Activated CD8-positive, alpha-beta T cell treated with anti-CD3 and anti-CD28 coated beads, Interleukin-2, amount 10 ng/mL, durations not matched to agents 7 days and 5 days (primary cell): ENCODE measurements at regions of chr5 and their contacts with region 1.

Region 1: GRCh38 chr5:96662725-96663513 is 743 bp downstream of the CAST start:
- DNase-seq: peak; percentile 89
- ATAC-seq: peak; percentile 85
- H3K4me3 Mint-ChIP-seq: peak overlapping the region; percentile 92
- H3K27ac Mint-ChIP-seq: peak overlapping the region; percentile 92
- H3K4me1 Mint-ChIP-seq: peaks cover 55% of the 10 kb centered on the region
- H3K27me3 Mint-ChIP-seq: peaks cover 11% of the 10 kb centered on the region

Region 2: GRCh38 chr5:96651948-96652753 is 10.8 kb before region 1 on chr5:
- CTCF ChIA-PET with region 1: interaction called, 17 read pairs
- POLR2A ChIA-PET with region 1: interaction called, 7 read pairs
- DNase-seq: no peak
- ATAC-seq: peak; percentile 47
- H3K4me3 Mint-ChIP-seq: no peak overlapping the region
- H3K27ac Mint-ChIP-seq: no peak overlapping the region
- H3K4me1 Mint-ChIP-seq: peaks cover 31% of the 10 kb centered on the region
- H3K27me3 Mint-ChIP-seq: peaks cover 50% of the 10 kb centered on the region

Region 3: DNA sequence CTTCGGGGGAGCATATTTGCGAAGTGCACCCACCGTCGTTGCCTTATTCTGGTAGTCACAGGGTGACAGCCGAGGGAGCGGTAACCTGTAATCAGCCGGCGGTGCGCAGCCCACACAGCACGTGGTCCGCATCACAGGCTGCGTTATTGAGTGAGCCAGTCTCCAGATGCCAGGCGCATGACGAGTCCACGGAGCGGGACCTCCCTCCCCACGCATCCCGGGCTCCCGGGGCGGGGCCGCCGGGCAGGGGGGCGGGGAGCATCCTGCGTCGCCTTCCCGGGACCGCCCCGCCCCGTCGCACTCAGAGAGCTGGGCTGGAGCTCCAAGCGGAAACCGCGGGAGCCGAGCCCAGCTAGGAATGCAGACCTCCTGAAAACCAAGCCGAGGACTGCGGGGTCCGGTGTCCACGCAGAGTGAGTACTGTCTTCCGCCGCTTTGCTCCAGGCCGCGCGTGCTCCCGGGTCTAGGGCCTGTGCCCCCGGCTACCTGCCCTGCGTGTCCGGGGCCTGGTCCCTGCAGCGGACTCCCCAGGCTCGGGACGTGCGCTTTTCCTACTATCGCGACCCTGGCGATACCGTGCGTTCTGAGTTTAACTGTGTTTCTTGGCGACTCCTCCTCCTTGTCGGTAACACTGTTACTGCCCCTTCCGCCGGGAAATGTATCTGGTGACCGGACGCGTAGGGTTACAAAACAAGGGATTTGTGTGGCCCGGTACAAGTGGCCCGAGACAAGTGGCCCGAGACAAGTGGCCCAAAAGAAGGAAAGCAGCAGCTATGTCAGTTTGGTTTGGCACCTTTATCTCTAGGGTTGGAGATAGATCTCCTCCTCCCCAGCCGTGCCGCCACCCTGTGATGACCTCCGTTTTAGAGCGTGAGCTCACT is 39.8 kb after region 1 on chr5:
- CTCF ChIA-PET with region 1: interaction called, 4 read pairs
- POLR2A ChIA-PET with region 1: interaction called, 35 read pairs
- DNase-seq: peak; percentile 76
- ATAC-seq: peak; percentile 86
- H3K4me3 Mint-ChIP-seq: peak overlapping the region; percentile 77
- H3K27ac Mint-ChIP-seq: peak overlapping the region; percentile 88
- H3K4me1 Mint-ChIP-seq: peaks cover 27% of the 10 kb centered on the region
- H3K27me3 Mint-ChIP-seq: no peaks in the 10 kb centered on the region

Region 4: DNA sequence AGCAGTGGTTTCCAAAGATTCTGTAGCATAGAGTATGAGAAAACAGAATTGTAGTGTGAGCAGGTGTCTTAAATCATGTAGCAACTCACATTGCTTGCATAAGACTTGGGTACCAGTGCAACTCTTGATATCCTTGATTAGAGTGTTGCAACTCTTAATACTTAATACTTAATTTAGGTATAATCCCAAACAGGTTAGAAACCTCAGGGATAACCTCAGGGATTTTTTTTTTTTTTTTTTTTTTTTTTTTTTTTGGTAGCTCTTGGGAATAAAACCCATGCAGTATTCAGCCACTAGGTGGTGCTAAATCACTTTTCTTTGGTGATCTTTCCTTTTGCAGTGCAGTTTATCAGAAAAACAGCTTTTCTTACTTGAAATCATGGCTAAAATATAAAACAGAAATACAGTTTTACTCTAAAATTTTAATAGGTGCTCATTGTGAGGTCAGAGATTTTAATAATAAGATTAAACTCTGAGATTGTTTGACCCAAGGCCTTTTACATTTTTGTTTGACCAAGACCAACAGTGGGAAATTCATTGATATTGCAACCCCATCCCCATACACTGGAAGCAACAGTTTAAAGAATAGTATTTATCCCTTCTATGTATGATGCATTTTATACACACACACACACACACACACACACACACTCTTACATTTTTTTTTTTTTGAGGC is 89.6 kb after region 1 on chr5:
- CTCF ChIA-PET with region 1: no interaction called
- POLR2A ChIA-PET with region 1: no interaction called
- DNase-seq: peak; percentile 67
- ATAC-seq: no peak
- H3K4me3 Mint-ChIP-seq: no peak overlapping the region
- H3K27ac Mint-ChIP-seq: no peak overlapping the region
- H3K4me1 Mint-ChIP-seq: no peaks in the 10 kb centered on the region
- H3K27me3 Mint-ChIP-seq: no peaks in the 10 kb centered on the region

Region 5: DNA sequence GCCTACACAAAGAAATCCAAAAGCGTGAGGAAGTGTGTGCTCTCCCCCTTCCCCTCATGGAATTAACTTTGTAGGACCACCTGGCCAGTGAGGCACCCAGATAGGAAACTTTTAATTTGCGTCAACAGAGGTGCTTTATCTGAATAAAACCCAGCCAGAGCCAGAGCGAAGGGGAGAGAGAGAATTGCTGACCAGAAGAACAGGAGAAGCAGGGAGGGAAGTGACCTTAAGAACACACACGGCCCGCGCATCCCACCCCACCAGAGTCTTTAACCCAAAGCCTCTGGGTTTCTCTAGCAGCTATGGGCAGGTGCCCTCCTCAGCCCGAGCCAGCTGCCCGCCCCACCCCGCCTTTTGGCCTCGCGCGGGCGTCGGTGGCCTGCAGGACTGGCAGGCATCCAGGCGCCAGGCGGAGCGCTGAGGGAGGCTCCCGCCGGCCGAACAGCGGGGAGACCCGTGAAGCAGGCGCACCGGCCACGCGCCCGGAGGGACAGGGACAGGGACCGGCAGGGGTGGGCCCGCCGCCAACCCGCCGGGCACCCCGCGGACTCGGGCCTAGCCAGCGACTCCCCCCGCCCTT is 144.2 kb after region 1 on chr5:
- CTCF ChIA-PET with region 1: interaction called, 4 read pairs
- POLR2A ChIA-PET with region 1: interaction called, 14 read pairs
- DNase-seq: peak; percentile 54
- ATAC-seq: peak; percentile 28
- H3K4me3 Mint-ChIP-seq: peak overlapping the region; percentile 90
- H3K27ac Mint-ChIP-seq: peak overlapping the region; percentile 99
- H3K4me1 Mint-ChIP-seq: peaks cover 73% of the 10 kb centered on the region
- H3K27me3 Mint-ChIP-seq: no peaks in the 10 kb centered on the region